ENCODE measurements at regions of chr11 and their contacts with region 1.

Region 1: DNA sequence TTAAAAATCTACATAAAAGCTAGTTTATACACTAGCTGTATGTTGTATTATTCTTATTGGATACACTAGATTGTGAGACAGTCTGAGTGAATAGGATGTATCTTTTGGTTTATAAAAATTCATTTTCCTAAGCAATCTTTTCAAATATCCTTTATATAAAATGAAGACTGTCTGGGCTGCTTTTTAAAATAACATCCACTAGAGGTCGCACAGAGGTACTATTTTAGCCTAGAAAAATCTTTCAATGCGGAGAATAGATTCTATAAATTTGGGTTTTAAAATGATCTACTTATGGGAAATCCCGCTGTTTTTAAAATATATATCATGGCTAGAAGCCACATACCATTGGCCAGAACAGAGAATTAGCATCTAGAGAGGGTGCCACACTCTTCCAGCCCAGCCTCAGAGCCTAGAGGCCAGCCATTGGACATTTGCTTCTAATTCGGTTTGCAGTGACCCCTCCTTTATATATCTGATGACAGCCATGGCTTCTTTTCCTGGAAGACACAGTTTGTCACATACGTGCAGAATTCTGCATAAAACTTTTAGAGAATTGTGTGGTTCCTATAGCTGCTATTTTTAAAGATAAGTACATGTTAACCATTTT is 7.3 kb downstream of the C11orf97 start:
- DNase-seq: no peak
- ATAC-seq: peak in 3 of 8 donors; percentile 23 to 46 (median 44)
- H3K4me3 ChIP-seq: no peak overlapping the region
- H3K27ac ChIP-seq: no peak overlapping the region
- H3K4me1 ChIP-seq: peaks cover 0 to 5% (median 0%) of the 10 kb centered on the region in 9 donors
- H3K27me3 ChIP-seq: peaks cover 0 to 8% (median 0%) of the 10 kb centered on the region in 7 donors
- CTCF ChIP-seq: peak; percentile 37 to 80 (median 69)

Region 2: GRCh38 chr11:94563176-94563847 is 43.7 kb after region 1 on chr11:
- intact Hi-C with region 1: loop called in 9 of 10 experiments (anchors 2 to 5 kb)
- DNase-seq: no peak
- ATAC-seq: peak; percentile 88 to 97 (median 94)
- H3K4me3 ChIP-seq: no peak overlapping the region
- H3K27ac ChIP-seq: no peak overlapping the region
- H3K4me1 ChIP-seq: peaks cover 0 to 36% (median 8%) of the 10 kb centered on the region in 9 donors
- H3K27me3 ChIP-seq: no peaks in the 10 kb centered on the region
- CTCF ChIP-seq: peak in 7 of 9 donors; percentile 14 to 60 (median 45)

Region 3: DNA sequence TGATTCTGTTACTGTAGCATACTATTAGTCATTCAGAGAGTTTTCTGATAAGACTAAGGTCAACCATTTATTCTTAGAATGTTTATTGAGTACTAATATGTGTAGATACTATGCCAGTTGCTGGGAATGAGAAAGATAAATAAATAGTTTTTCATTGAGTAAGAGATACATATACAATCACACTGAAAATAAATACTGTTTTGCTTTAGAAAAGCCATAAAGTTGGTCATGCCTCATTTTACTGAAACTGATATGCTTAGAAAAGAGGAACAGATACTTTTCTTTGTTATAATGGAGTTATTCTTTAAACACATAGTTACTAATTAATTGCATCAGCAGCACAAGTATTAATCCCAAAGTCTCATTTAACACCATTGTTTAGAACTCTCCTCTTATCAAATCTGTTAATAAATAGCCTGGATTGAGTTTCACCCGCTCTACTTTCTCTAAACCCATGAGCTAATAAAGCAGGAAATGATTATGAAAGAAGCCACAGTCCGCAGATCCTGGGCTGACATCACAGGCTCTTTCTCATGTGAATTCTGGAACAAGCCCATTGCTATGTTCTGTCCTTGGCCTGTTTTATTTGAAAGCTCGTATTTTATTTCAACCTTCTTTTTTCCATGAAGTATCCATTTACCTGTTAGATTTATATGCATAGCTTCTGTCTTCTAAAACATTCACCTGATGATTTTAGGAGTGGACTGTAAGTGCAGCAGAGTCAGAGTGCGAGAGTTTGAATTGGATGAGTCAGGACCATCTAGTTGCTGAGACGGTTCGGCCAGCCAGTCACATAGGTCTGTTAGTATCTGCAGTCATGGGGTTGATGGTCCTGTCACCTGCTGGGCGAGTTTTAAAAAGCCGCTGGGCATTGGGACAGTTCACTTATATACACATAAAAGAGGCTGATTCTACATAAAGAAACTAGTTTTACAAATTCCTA is 83.1 kb after region 1 on chr11:
- intact Hi-C with region 1: loop called in 4 of 10 experiments (anchors 2 to 5 kb)
- DNase-seq: peak; percentile 22 to 67
- ATAC-seq: peak in 4 of 8 donors; percentile 77 to 93 (median 87)
- H3K4me3 ChIP-seq: peak overlapping the region in 1 of 10 donors; percentile 5
- H3K27ac ChIP-seq: peak overlapping the region in 1 of 10 donors; percentile 51
- H3K4me1 ChIP-seq: peaks cover 0 to 14% (median 0%) of the 10 kb centered on the region in 9 donors
- H3K27me3 ChIP-seq: no peaks in the 10 kb centered on the region
- CTCF ChIP-seq: peak in 5 of 9 donors; percentile 31 to 73 (median 52)

Region 4: GRCh38 chr11:94897330-94897768 is 377.8 kb after region 1 on chr11:
- intact Hi-C with region 1: loop called in 1 of 10 experiments (anchors 10 kb)
- DNase-seq: peak in 1 of 2 donors; percentile 59
- ATAC-seq: peak in 3 of 8 donors; percentile 42 to 62 (median 55)
- H3K4me3 ChIP-seq: no peak overlapping the region
- H3K27ac ChIP-seq: peak overlapping the region in 1 of 10 donors; percentile 4
- H3K4me1 ChIP-seq: peaks cover 0 to 9% (median 0%) of the 10 kb centered on the region in 9 donors
- H3K27me3 ChIP-seq: no peaks in the 10 kb centered on the region
- CTCF ChIP-seq: peak; percentile 77 to 96 (median 89)